ENCODE measurements at regions of chr6 and their contacts with region 1.

Region 1: GRCh38 chr6:73520688-73521350 is at the start of gene EEF1A1:
- DNase-seq: peak; percentile 96 to 100
- ATAC-seq: peak; percentile 74 to 92 (median 80)
- H3K4me3 ChIP-seq: peak within 1 kb of the TSS; percentile 100
- H3K4me3 Mint-ChIP-seq: peak within 1 kb of the TSS; percentile 92
- H3K27ac ChIP-seq: peak within 1 kb of the TSS; percentile 98
- H3K27ac Mint-ChIP-seq: peak within 1 kb of the TSS; percentile 98 to 100
- H3K4me1 ChIP-seq: peaks cover 48% of the 10 kb centered on the region
- H3K4me1 Mint-ChIP-seq: peaks cover 63 to 65% of the 10 kb centered on the region in 2 donors
- H3K27me3 ChIP-seq: no peaks in the 10 kb centered on the region
- H3K27me3 Mint-ChIP-seq: no peaks in the 10 kb centered on the region
- CTCF ChIP-seq: no peak
- total RNA-seq, gene EEF1A1: 6,475 to 7,348 (median 7,348) TPM

Region 2: GRCh38 chr6:73418081-73418741 is 102.6 kb before region 1 on chr6:
- intact Hi-C with region 1: loop called (anchors 5 kb)
- DNase-seq: no peak
- ATAC-seq: no peak
- H3K4me3 ChIP-seq: no peak overlapping the region
- H3K4me3 Mint-ChIP-seq: peak overlapping the region; percentile 43
- H3K27ac ChIP-seq: no peak overlapping the region
- H3K27ac Mint-ChIP-seq: peak overlapping the region; percentile 72 to 82
- H3K4me1 ChIP-seq: peaks cover 20% of the 10 kb centered on the region
- H3K4me1 Mint-ChIP-seq: peaks cover 24% of the 10 kb centered on the region in 2 donors
- H3K27me3 ChIP-seq: no peaks in the 10 kb centered on the region
- H3K27me3 Mint-ChIP-seq: no peaks in the 10 kb centered on the region
- CTCF ChIP-seq: no peak

Region 3: GRCh38 chr6:73451223-73452107 is 69.4 kb before region 1 on chr6:
- intact Hi-C with region 1: no loop called
- DNase-seq: peak; percentile 41 to 69
- ATAC-seq: peak; percentile 51 to 64 (median 62)
- H3K4me3 ChIP-seq: peak overlapping the region; percentile 63
- H3K4me3 Mint-ChIP-seq: peak overlapping the region; percentile 91
- H3K27ac ChIP-seq: peak overlapping the region; percentile 68
- H3K27ac Mint-ChIP-seq: peak overlapping the region; percentile 11 to 83
- H3K4me1 ChIP-seq: peaks cover 30% of the 10 kb centered on the region
- H3K4me1 Mint-ChIP-seq: peaks cover 21 to 27% of the 10 kb centered on the region in 2 donors
- H3K27me3 ChIP-seq: no peaks in the 10 kb centered on the region
- H3K27me3 Mint-ChIP-seq: no peaks in the 10 kb centered on the region
- CTCF ChIP-seq: no peak

Region 4: GRCh38 chr6:73461537-73462350 is 59.1 kb before region 1 on chr6 and contains the start of gene MTO1:
- intact Hi-C with region 1: loop called (anchors 1 kb)
- DNase-seq: peak; percentile 79 to 94
- ATAC-seq: peak; percentile 91 to 96 (median 92)
- H3K4me3 ChIP-seq: peak within 1 kb of the TSS; percentile 86
- H3K4me3 Mint-ChIP-seq: peak within 1 kb of the TSS; percentile 98
- H3K27ac ChIP-seq: peak within 1 kb of the TSS; percentile 93
- H3K27ac Mint-ChIP-seq: peak within 1 kb of the TSS; percentile 98 to 99
- H3K4me1 ChIP-seq: peaks cover 21% of the 10 kb centered on the region
- H3K4me1 Mint-ChIP-seq: peaks cover 25 to 26% of the 10 kb centered on the region in 2 donors
- H3K27me3 ChIP-seq: no peaks in the 10 kb centered on the region
- H3K27me3 Mint-ChIP-seq: no peaks in the 10 kb centered on the region
- CTCF ChIP-seq: no peak
- total RNA-seq, gene MTO1: 37.8 to 46.1 (median 41.3) TPM

Region 5: GRCh38 chr6:73580247-73581149 is 59.7 kb after region 1 on chr6:
- intact Hi-C with region 1: loop called (anchors 1 kb)
- DNase-seq: peak; percentile 71
- ATAC-seq: peak; percentile 80 to 85 (median 83)
- H3K4me3 ChIP-seq: peak overlapping the region; percentile 12
- H3K4me3 Mint-ChIP-seq: peak overlapping the region; percentile 86
- H3K27ac ChIP-seq: peak overlapping the region; percentile 90
- H3K27ac Mint-ChIP-seq: peak overlapping the region; percentile 91 to 92
- H3K4me1 ChIP-seq: peaks cover 32% of the 10 kb centered on the region
- H3K4me1 Mint-ChIP-seq: peaks cover 14 to 17% of the 10 kb centered on the region in 2 donors
- H3K27me3 ChIP-seq: no peaks in the 10 kb centered on the region
- H3K27me3 Mint-ChIP-seq: no peaks in the 10 kb centered on the region
- CTCF ChIP-seq: peak; percentile 24

Region 6: DNA sequence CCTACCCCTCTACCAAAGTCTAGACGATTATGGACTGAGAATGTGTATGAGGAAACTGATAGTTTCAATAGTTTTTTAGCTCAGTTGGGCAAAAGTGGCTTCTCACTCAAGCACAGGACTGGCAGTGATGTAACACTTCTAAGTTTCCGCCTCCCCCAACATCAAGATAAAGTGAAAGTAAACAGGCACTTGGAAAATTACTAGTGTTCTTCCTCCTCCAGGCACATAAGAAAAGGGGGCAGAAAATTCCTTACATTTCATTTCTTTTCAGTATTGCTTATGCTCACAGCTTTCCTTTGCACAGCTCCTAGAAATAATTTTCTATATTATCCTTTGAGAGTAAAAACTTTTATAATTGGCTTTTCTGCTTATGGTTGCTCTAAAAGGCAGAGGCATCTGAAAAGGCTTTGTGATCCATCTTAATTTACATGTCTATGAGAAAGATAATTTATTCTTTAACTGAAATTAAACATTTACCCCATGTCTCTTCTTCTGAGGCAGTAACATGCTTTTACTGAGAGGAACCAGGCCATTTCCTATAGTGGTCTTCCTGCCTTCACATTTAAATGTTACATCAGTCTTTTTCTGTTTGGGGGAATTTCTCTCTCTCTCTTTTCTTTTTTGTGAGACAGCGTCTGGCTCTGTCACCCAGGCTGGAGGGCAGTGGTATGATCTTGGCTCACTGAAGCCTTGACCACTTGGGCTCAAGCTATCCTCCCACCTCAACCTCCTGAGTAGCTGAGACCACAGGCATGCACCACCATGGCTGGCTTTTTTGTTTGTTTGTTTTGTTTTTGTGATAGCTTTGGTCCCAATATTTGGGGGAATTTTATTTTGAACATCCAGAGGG is 65.0 kb after region 1 on chr6:
- intact Hi-C with region 1: loop called (anchors 1 kb)
- DNase-seq: peak; percentile 31 to 82
- ATAC-seq: peak; percentile 74 to 85 (median 83)
- H3K4me3 ChIP-seq: peak overlapping the region; percentile 36
- H3K4me3 Mint-ChIP-seq: peak overlapping the region; percentile 80
- H3K27ac ChIP-seq: peak overlapping the region; percentile 97
- H3K27ac Mint-ChIP-seq: peak overlapping the region; percentile 99
- H3K4me1 ChIP-seq: peaks cover 20% of the 10 kb centered on the region
- H3K4me1 Mint-ChIP-seq: peaks cover 23 to 29% of the 10 kb centered on the region in 2 donors
- H3K27me3 ChIP-seq: no peaks in the 10 kb centered on the region
- H3K27me3 Mint-ChIP-seq: no peaks in the 10 kb centered on the region
- CTCF ChIP-seq: no peak

Region 7: GRCh38 chr6:73653571-73654424 is 133.0 kb after region 1 on chr6 and contains the start of gene SLC17A5:
- intact Hi-C with region 1: loop called (anchors 2 kb)
- DNase-seq: peak; percentile 84 to 93
- ATAC-seq: peak; percentile 84 to 95 (median 86)
- H3K4me3 ChIP-seq: peak within 1 kb of the TSS; percentile 81
- H3K4me3 Mint-ChIP-seq: peak within 1 kb of the TSS; percentile 96
- H3K27ac ChIP-seq: peak within 1 kb of the TSS; percentile 95
- H3K27ac Mint-ChIP-seq: peak within 1 kb of the TSS; percentile 94 to 98
- H3K4me1 ChIP-seq: peaks cover 16% of the 10 kb centered on the region
- H3K4me1 Mint-ChIP-seq: peaks cover 47 to 50% of the 10 kb centered on the region in 2 donors
- H3K27me3 ChIP-seq: no peaks in the 10 kb centered on the region
- H3K27me3 Mint-ChIP-seq: no peaks in the 10 kb centered on the region
- CTCF ChIP-seq: no peak
- total RNA-seq, gene SLC17A5: 8.5 to 13.8 (median 9.1) TPM

Measured in natural killer cell (primary cell).